ENCODE measurements at regions of chrX and their contacts with region 1.

Region 1: GRCh38 chrX:3638280-3638873 is 75.1 kb downstream of the PRKX start:
- DNase-seq: peak in 21 of 35 experiments; percentile 0 to 49 (median 18)
- ATAC-seq: peak in 1 of 4 experiments; percentile 46
- H3K4me3 ChIP-seq: no peak overlapping the region
- H3K4me3 Mint-ChIP-seq: no peak overlapping the region
- H3K27ac ChIP-seq: no peak overlapping the region
- H3K27ac Mint-ChIP-seq: no peak overlapping the region
- H3K4me1 ChIP-seq: no peaks in the 10 kb centered on the region
- H3K4me1 Mint-ChIP-seq: peaks cover 0 to 15% (median 2%) of the 10 kb centered on the region in 3 donors
- H3K27me3 ChIP-seq: no peaks in the 10 kb centered on the region
- H3K27me3 Mint-ChIP-seq: no peaks in the 10 kb centered on the region

Region 2: GRCh38 chrX:3609810-3610209 is 28.6 kb before region 1 on chrX:
- CTCF ChIA-PET with region 1: interaction called in 1 of 2 experiments, 14 read pairs
- POLR2A ChIA-PET with region 1: no interaction called
- DNase-seq: no peak
- ATAC-seq: no peak
- H3K4me3 ChIP-seq: no peak overlapping the region
- H3K4me3 Mint-ChIP-seq: no peak overlapping the region
- H3K27ac ChIP-seq: no peak overlapping the region
- H3K27ac Mint-ChIP-seq: no peak overlapping the region
- H3K4me1 ChIP-seq: no peaks in the 10 kb centered on the region
- H3K4me1 Mint-ChIP-seq: no peaks in the 10 kb centered on the region
- H3K27me3 ChIP-seq: no peaks in the 10 kb centered on the region
- H3K27me3 Mint-ChIP-seq: no peaks in the 10 kb centered on the region

Region 3: DNA sequence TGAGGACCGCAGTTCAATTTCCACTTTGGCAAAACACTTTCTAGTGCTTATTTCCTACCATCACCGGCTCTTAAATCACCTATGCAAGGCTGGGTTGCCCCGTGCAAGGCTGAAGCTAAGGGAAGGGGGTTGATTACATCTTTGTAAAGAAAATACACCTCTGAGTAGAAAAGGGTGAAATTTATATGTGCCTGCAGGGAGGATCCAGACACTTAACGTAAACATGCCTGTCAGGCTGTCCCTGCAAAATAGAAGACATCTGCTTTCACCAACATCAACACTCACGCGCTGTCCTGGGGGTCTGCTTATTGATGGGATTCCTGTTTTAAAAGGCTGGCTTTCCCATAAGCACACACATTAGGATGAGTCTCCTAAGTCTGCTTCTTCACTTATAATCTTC is 17.0 kb before region 1 on chrX:
- CTCF ChIA-PET with region 1: no interaction called
- POLR2A ChIA-PET with region 1: no interaction called
- DNase-seq: no peak
- ATAC-seq: no peak
- H3K4me3 ChIP-seq: no peak overlapping the region
- H3K4me3 Mint-ChIP-seq: no peak overlapping the region
- H3K27ac ChIP-seq: no peak overlapping the region
- H3K27ac Mint-ChIP-seq: no peak overlapping the region
- H3K4me1 ChIP-seq: no peaks in the 10 kb centered on the region
- H3K4me1 Mint-ChIP-seq: no peaks in the 10 kb centered on the region
- H3K27me3 ChIP-seq: no peaks in the 10 kb centered on the region
- H3K27me3 Mint-ChIP-seq: no peaks in the 10 kb centered on the region

Region 4: GRCh38 chrX:3659761-3660160 is 21.4 kb after region 1 on chrX:
- CTCF ChIA-PET with region 1: no interaction called
- POLR2A ChIA-PET with region 1: no interaction called
- DNase-seq: no peak
- ATAC-seq: no peak
- H3K4me3 ChIP-seq: no peak overlapping the region
- H3K4me3 Mint-ChIP-seq: no peak overlapping the region
- H3K27ac ChIP-seq: no peak overlapping the region
- H3K27ac Mint-ChIP-seq: no peak overlapping the region
- H3K4me1 ChIP-seq: no peaks in the 10 kb centered on the region
- H3K4me1 Mint-ChIP-seq: peaks cover 12 to 17% (median 12%) of the 10 kb centered on the region in 3 donors
- H3K27me3 ChIP-seq: no peaks in the 10 kb centered on the region
- H3K27me3 Mint-ChIP-seq: no peaks in the 10 kb centered on the region

Region 5: GRCh38 chrX:3811331-3812311 is 173.2 kb after region 1 on chrX:
- CTCF ChIA-PET with region 1: interaction called in 1 of 2 experiments, 10 read pairs
- POLR2A ChIA-PET with region 1: no interaction called
- DNase-seq: peak in 29 of 35 experiments; percentile 11 to 73 (median 33)
- ATAC-seq: no peak
- H3K4me3 ChIP-seq: no peak overlapping the region
- H3K4me3 Mint-ChIP-seq: peak overlapping the region; percentile 5 to 51 (median 31)
- H3K27ac ChIP-seq: no peak overlapping the region
- H3K27ac Mint-ChIP-seq: peak overlapping the region in 1 of 2 donors; percentile 52
- H3K4me1 ChIP-seq: peaks cover 5 to 16% of the 10 kb centered on the region in 2 experiments
- H3K4me1 Mint-ChIP-seq: peaks cover 11 to 14% (median 11%) of the 10 kb centered on the region in 3 donors
- H3K27me3 ChIP-seq: peaks cover 3 to 4% of the 10 kb centered on the region in 2 experiments
- H3K27me3 Mint-ChIP-seq: peaks cover 21 to 27% of the 10 kb centered on the region in 2 donors

Measured in T-cell (primary cell).